Left lung (tissue), 14 donors: ENCODE measurements at regions of chr4 and their contacts with region 1.

Region 1: GRCh38 chr4:177047070-177047850 is 254.5 kb upstream of the VEGFC start:
- DNase-seq: peak in 3 of 4 donors; percentile 57 to 81 (median 59)
- ATAC-seq: peak; percentile 97
- H3K4me3 ChIP-seq: no peak overlapping the region
- H3K27ac ChIP-seq: no peak overlapping the region
- H3K4me1 ChIP-seq: no peaks in the 10 kb centered on the region
- H3K27me3 ChIP-seq: no peaks in the 10 kb centered on the region
- CTCF ChIP-seq: peak; percentile 67 to 74

Region 2: DNA sequence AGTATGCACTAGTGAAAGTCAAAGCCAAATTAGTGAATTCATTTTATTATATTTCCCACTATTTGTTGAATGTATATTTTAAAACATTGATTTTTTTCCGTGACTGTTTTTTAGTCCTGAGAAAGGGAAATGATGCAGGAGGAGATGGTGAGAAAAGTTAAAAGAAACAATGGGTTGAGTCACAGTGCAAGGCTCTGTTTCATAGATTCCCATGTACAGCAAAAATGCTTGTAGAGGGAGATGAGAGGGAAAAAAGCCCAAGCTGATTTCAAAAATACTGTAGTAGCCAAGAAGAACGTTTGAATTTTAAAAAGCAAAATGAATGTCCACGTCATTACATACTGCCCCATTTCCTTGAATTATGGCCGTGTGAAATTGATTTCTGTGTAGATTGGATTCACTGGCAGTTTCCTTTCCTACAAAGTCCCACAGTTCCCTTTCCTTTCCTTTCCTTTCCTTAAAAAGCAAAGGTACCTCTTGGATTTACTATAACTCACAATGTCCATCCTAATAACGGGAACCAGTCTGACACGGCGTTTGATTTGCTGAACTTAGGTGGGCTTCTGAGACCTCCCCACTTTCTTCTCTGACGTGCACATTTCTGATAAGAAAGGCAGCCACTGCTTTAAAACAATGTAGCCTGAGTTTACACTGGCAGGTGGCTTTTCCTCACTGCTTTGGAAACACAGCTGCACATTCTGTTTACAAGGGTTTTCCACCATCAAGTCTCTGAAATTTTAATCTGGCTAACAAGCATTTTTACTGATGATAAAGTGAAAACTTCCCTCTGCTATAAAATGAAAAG is 663.8 kb before region 1 on chr4:
- intact Hi-C with region 1: loop called in 1 of 2 experiments (anchors 10 kb)
- DNase-seq: no peak
- ATAC-seq: no peak
- H3K4me3 ChIP-seq: no peak overlapping the region
- H3K27ac ChIP-seq: no peak overlapping the region
- H3K4me1 ChIP-seq: no peaks in the 10 kb centered on the region
- H3K27me3 ChIP-seq: no peaks in the 10 kb centered on the region
- CTCF ChIP-seq: no peak

Region 3: GRCh38 chr4:176841717-176842116 is 205.5 kb before region 1 on chr4:
- intact Hi-C with region 1: no loop called
- DNase-seq: no peak
- ATAC-seq: no peak
- H3K4me3 ChIP-seq: no peak overlapping the region
- H3K27ac ChIP-seq: no peak overlapping the region
- H3K4me1 ChIP-seq: no peaks in the 10 kb centered on the region
- H3K27me3 ChIP-seq: no peaks in the 10 kb centered on the region
- CTCF ChIP-seq: no peak

Region 4: GRCh38 chr4:176964116-176964691 is 83.1 kb before region 1 on chr4:
- intact Hi-C with region 1: no loop called
- DNase-seq: no peak
- ATAC-seq: no peak
- H3K4me3 ChIP-seq: no peak overlapping the region
- H3K27ac ChIP-seq: no peak overlapping the region
- H3K4me1 ChIP-seq: no peaks in the 10 kb centered on the region
- H3K27me3 ChIP-seq: no peaks in the 10 kb centered on the region
- CTCF ChIP-seq: no peak